CD4-positive, alpha-beta memory T cell (primary cell): ENCODE measurements at regions of chr2 and their contacts with region 1.

Region 1: GRCh38 chr2:28821295-28821958 is 10.8 kb downstream of the SPDYA start:
- DNase-seq: peak; percentile 57 to 65 (median 64)
- H3K4me3 ChIP-seq: no peak overlapping the region
- H3K4me3 Mint-ChIP-seq: no peak overlapping the region
- H3K27ac ChIP-seq: no peak overlapping the region
- H3K27ac Mint-ChIP-seq: peak overlapping the region in 2 of 7 donors; percentile 0 to 38
- H3K4me1 ChIP-seq: no peaks in the 10 kb centered on the region
- H3K4me1 Mint-ChIP-seq: peaks cover 0 to 5% (median 3%) of the 10 kb centered on the region in 4 donors
- H3K27me3 ChIP-seq: no peaks in the 10 kb centered on the region
- H3K27me3 Mint-ChIP-seq: peaks cover 0 to 4% of the 10 kb centered on the region in 2 donors

Region 2: GRCh38 chr2:28810384-28811285 is 10.8 kb before region 1 on chr2 and contains the start of gene SPDYA:
- CTCF ChIA-PET with region 1: interaction called, 13 read pairs
- POLR2A ChIA-PET with region 1: interaction called, 5 read pairs
- intact Hi-C with region 1: no loop called
- DNase-seq: peak; percentile 76 to 81 (median 79)
- H3K4me3 ChIP-seq: peak within 1 kb of the TSS in 1 of 2 donors; percentile 60
- H3K4me3 Mint-ChIP-seq: peak within 1 kb of the TSS; percentile 79 to 91 (median 84)
- H3K27ac ChIP-seq: peak within 1 kb of the TSS; percentile 41
- H3K27ac Mint-ChIP-seq: peak within 1 kb of the TSS; percentile 73 to 88 (median 84)
- H3K4me1 ChIP-seq: peaks cover 13% of the 10 kb centered on the region
- H3K4me1 Mint-ChIP-seq: peaks cover 5 to 16% (median 11%) of the 10 kb centered on the region in 4 donors
- H3K27me3 ChIP-seq: no peaks in the 10 kb centered on the region
- H3K27me3 Mint-ChIP-seq: no peaks in the 10 kb centered on the region
- total RNA-seq, gene SPDYA: 4.5 to 4.9 TPM

Region 3: GRCh38 chr2:28894470-28895177 is 73.2 kb after region 1 on chr2 and contains the start of gene WDR43:
- CTCF ChIA-PET with region 1: interaction called, 3 read pairs
- POLR2A ChIA-PET with region 1: no interaction called
- intact Hi-C with region 1: loop called (anchors 2 kb)
- DNase-seq: peak; percentile 97 to 99 (median 98)
- H3K4me3 ChIP-seq: peak within 1 kb of the TSS; percentile 75 to 91
- H3K4me3 Mint-ChIP-seq: peak within 1 kb of the TSS; percentile 91 to 100 (median 96)
- H3K27ac ChIP-seq: peak within 1 kb of the TSS; percentile 83
- H3K27ac Mint-ChIP-seq: peak within 1 kb of the TSS; percentile 88 to 99 (median 95)
- H3K4me1 ChIP-seq: peaks cover 43% of the 10 kb centered on the region
- H3K4me1 Mint-ChIP-seq: peaks cover 33 to 50% (median 40%) of the 10 kb centered on the region in 4 donors
- H3K27me3 ChIP-seq: no peaks in the 10 kb centered on the region
- H3K27me3 Mint-ChIP-seq: peaks cover 0 to 2% of the 10 kb centered on the region in 2 donors
- total RNA-seq, gene WDR43: 52.9 to 57.5 TPM

Region 4: GRCh38 chr2:28958689-28959088 is 137.3 kb after region 1 on chr2:
- CTCF ChIA-PET with region 1: interaction called, 3 read pairs
- POLR2A ChIA-PET with region 1: no interaction called
- intact Hi-C with region 1: loop called (anchors 5 kb)
- DNase-seq: peak in 4 of 5 donors; percentile 51 to 67 (median 64)
- H3K4me3 ChIP-seq: no peak overlapping the region
- H3K4me3 Mint-ChIP-seq: no peak overlapping the region
- H3K27ac ChIP-seq: no peak overlapping the region
- H3K27ac Mint-ChIP-seq: peak overlapping the region in 1 of 7 donors; percentile 7
- H3K4me1 ChIP-seq: peaks cover 10% of the 10 kb centered on the region
- H3K4me1 Mint-ChIP-seq: peaks cover 0 to 10% (median 5%) of the 10 kb centered on the region in 4 donors
- H3K27me3 ChIP-seq: no peaks in the 10 kb centered on the region
- H3K27me3 Mint-ChIP-seq: no peaks in the 10 kb centered on the region

Region 5: DNA sequence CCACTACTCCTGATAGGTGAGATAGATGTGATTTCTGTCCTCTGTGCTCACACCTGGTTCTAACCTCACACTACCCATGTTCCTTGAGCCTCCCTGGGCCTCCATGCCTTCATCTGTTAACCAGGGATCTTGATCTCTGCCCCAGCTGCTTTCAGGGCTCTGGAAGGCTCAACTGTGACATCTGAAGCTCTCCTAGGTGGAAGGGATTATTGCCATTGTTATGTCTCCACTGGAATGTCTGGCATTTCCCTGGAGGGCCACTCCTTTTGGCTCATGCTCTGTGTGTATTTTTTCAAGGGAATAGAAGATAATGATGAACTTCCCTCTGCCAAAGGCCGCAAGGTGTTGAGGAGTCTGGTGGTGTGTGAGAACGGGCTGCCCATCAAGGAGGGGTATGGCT is 211.7 kb after region 1 on chr2:
- CTCF ChIA-PET with region 1: no interaction called
- POLR2A ChIA-PET with region 1: no interaction called
- intact Hi-C with region 1: no loop called
- DNase-seq: no peak
- H3K4me3 ChIP-seq: no peak overlapping the region
- H3K4me3 Mint-ChIP-seq: no peak overlapping the region
- H3K27ac ChIP-seq: no peak overlapping the region
- H3K27ac Mint-ChIP-seq: peak overlapping the region in 4 of 7 donors; percentile 23 to 61 (median 50)
- H3K4me1 ChIP-seq: peaks cover 13% of the 10 kb centered on the region
- H3K4me1 Mint-ChIP-seq: peaks cover 10 to 37% (median 15%) of the 10 kb centered on the region in 4 donors
- H3K27me3 ChIP-seq: no peaks in the 10 kb centered on the region
- H3K27me3 Mint-ChIP-seq: no peaks in the 10 kb centered on the region

Region 6: GRCh38 chr2:29196792-29197788 is 375.7 kb after region 1 on chr2:
- CTCF ChIA-PET with region 1: interaction called, 4 read pairs
- POLR2A ChIA-PET with region 1: no interaction called
- intact Hi-C with region 1: loop called (anchors 1 kb)
- DNase-seq: peak; percentile 66 to 79 (median 71)
- H3K4me3 ChIP-seq: no peak overlapping the region
- H3K4me3 Mint-ChIP-seq: no peak overlapping the region
- H3K27ac ChIP-seq: no peak overlapping the region
- H3K27ac Mint-ChIP-seq: peak overlapping the region in 2 of 7 donors; percentile 15 to 81
- H3K4me1 ChIP-seq: no peaks in the 10 kb centered on the region
- H3K4me1 Mint-ChIP-seq: peaks cover 0 to 9% (median 1%) of the 10 kb centered on the region in 4 donors
- H3K27me3 ChIP-seq: no peaks in the 10 kb centered on the region
- H3K27me3 Mint-ChIP-seq: no peaks in the 10 kb centered on the region

Region 7: GRCh38 chr2:30072250-30072842 is 1250.9 kb after region 1 on chr2:
- CTCF ChIA-PET with region 1: no interaction called
- POLR2A ChIA-PET with region 1: no interaction called
- intact Hi-C with region 1: loop called (anchors 2 kb)
- DNase-seq: peak; percentile 42 to 64 (median 45)
- H3K4me3 ChIP-seq: no peak overlapping the region
- H3K4me3 Mint-ChIP-seq: peak overlapping the region in 1 of 8 donors; percentile 21
- H3K27ac ChIP-seq: no peak overlapping the region
- H3K27ac Mint-ChIP-seq: no peak overlapping the region
- H3K4me1 ChIP-seq: no peaks in the 10 kb centered on the region
- H3K4me1 Mint-ChIP-seq: no peaks in the 10 kb centered on the region
- H3K27me3 ChIP-seq: no peaks in the 10 kb centered on the region
- H3K27me3 Mint-ChIP-seq: peaks cover 31 to 32% of the 10 kb centered on the region in 2 donors